CD8-positive, alpha-beta memory T cell (primary cell): ENCODE measurements at regions of chr12 and their contacts with region 1.

Region 1: GRCh38 chr12:120265473-120266179 is at the start of gene PXN:
- DNase-seq: peak; percentile 87 to 95 (median 90)
- H3K4me3 ChIP-seq: peak within 1 kb of the TSS; percentile 97
- H3K4me3 Mint-ChIP-seq: peak within 1 kb of the TSS; percentile 82 to 98 (median 94)
- H3K27ac ChIP-seq: peak within 1 kb of the TSS; percentile 82
- H3K27ac Mint-ChIP-seq: peak within 1 kb of the TSS; percentile 85 to 98 (median 91)
- H3K4me1 ChIP-seq: peaks cover 44% of the 10 kb centered on the region
- H3K4me1 Mint-ChIP-seq: peaks cover 41 to 48% (median 42%) of the 10 kb centered on the region in 3 donors
- H3K27me3 ChIP-seq: no peaks in the 10 kb centered on the region
- H3K27me3 Mint-ChIP-seq: peaks cover 0 to 2% of the 10 kb centered on the region in 2 donors
- total RNA-seq, gene PXN: 33.7 to 35.9 TPM

Region 2: DNA sequence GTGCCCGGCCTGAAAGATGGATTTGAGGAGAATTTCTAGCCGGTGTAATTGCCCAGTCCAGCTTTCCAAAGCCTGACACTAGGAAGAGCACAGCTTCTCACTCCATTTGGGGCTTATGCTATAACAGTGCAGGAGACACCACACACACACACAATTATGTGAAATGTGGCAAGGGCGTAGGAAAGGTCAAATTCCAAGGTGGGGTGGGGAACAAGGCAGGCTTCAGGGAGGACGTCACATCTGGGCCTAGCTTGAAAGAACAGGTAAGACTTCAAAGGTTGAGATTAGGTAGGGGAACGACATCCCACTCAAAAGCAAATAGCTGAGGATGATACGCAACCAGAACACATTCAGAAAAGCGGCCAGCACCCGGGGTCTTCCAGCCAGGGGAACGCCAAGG is 160.7 kb before region 1 on chr12:
- CTCF ChIA-PET with region 1: no interaction called
- POLR2A ChIA-PET with region 1: no interaction called
- DNase-seq: no peak
- H3K4me3 ChIP-seq: no peak overlapping the region
- H3K4me3 Mint-ChIP-seq: peak overlapping the region in 1 of 7 donors; percentile 68
- H3K27ac ChIP-seq: no peak overlapping the region
- H3K27ac Mint-ChIP-seq: peak overlapping the region in 3 of 8 donors; percentile 46 to 83 (median 78)
- H3K4me1 ChIP-seq: peaks cover 29% of the 10 kb centered on the region
- H3K4me1 Mint-ChIP-seq: peaks cover 45 to 69% (median 62%) of the 10 kb centered on the region in 3 donors
- H3K27me3 ChIP-seq: no peaks in the 10 kb centered on the region
- H3K27me3 Mint-ChIP-seq: no peaks in the 10 kb centered on the region

Region 3: GRCh38 chr12:120199595-120200306 is 65.9 kb before region 1 on chr12:
- CTCF ChIA-PET with region 1: interaction called, 43 read pairs
- POLR2A ChIA-PET with region 1: interaction called, 37 read pairs
- DNase-seq: peak in 2 of 5 donors; percentile 14 to 23
- H3K4me3 ChIP-seq: peak overlapping the region; percentile 99
- H3K4me3 Mint-ChIP-seq: peak overlapping the region; percentile 85 to 99 (median 98)
- H3K27ac ChIP-seq: peak overlapping the region; percentile 86
- H3K27ac Mint-ChIP-seq: peak overlapping the region; percentile 89 to 99 (median 96)
- H3K4me1 ChIP-seq: peaks cover 46% of the 10 kb centered on the region
- H3K4me1 Mint-ChIP-seq: peaks cover 36 to 51% (median 44%) of the 10 kb centered on the region in 3 donors
- H3K27me3 ChIP-seq: no peaks in the 10 kb centered on the region
- H3K27me3 Mint-ChIP-seq: peaks cover 0 to 1% of the 10 kb centered on the region in 2 donors

Region 4: DNA sequence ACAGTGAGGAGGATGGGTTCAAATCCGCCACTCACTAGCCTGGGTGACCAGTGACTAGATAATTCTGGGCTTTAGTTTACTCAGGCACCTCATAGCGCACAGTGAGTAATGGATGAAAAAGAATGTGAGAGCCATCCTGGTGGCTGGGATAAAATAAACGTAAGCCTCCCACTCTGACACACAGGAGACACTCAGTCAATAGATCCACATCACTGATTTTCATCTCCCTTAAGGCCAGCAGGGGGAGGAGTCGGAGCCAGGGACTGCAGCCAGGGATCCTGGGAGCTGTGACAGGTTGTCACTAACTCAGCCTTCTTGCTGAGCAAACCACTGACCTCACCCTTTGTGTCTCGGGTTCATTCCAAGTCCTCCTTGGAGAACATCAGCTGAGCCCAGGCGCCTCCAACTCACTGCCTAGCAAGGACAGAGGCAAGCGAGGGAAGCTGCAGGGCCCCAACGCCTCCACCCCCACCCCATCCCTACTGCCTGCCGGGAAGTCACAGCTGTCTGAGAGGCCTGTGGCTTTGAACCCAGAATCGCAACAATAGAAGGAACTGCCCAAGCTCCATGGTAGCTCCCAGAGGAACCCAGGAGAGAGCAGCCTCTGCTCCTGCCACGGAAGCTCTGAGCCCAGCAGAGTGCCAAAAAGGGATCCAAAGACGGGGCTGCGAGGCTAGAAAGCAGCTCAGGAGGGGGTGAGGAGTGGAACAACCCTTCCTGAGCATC is 30.8 kb before region 1 on chr12:
- CTCF ChIA-PET with region 1: interaction called, 727 read pairs
- POLR2A ChIA-PET with region 1: interaction called, 101 read pairs
- DNase-seq: no peak
- H3K4me3 ChIP-seq: no peak overlapping the region
- H3K4me3 Mint-ChIP-seq: peak overlapping the region in 2 of 7 donors; percentile 12 to 34
- H3K27ac ChIP-seq: peak overlapping the region; percentile 45
- H3K27ac Mint-ChIP-seq: peak overlapping the region in 7 of 8 donors; percentile 37 to 94 (median 84)
- H3K4me1 ChIP-seq: peaks cover 94% of the 10 kb centered on the region
- H3K4me1 Mint-ChIP-seq: peaks cover 82 to 90% (median 84%) of the 10 kb centered on the region in 3 donors
- H3K27me3 ChIP-seq: no peaks in the 10 kb centered on the region
- H3K27me3 Mint-ChIP-seq: no peaks in the 10 kb centered on the region

Region 5: GRCh38 chr12:120292661-120293531 is 27.3 kb after region 1 on chr12 and contains the start of gene RNU4-1:
- CTCF ChIA-PET with region 1: interaction called, 9 read pairs
- POLR2A ChIA-PET with region 1: interaction called, 45 read pairs
- DNase-seq: peak; percentile 52 to 90 (median 85)
- H3K4me3 ChIP-seq: peak within 1 kb of the TSS; percentile 91
- H3K4me3 Mint-ChIP-seq: no peak within 1 kb of the TSS
- H3K27ac ChIP-seq: peak within 1 kb of the TSS; percentile 100
- H3K27ac Mint-ChIP-seq: no peak within 1 kb of the TSS
- H3K4me1 ChIP-seq: peaks cover 16% of the 10 kb centered on the region
- H3K4me1 Mint-ChIP-seq: peaks cover 4 to 7% (median 5%) of the 10 kb centered on the region in 3 donors
- H3K27me3 ChIP-seq: no peaks in the 10 kb centered on the region
- H3K27me3 Mint-ChIP-seq: no peaks in the 10 kb centered on the region
- total RNA-seq, gene RNU4-1: 628 to 678 TPM

Region 6: GRCh38 chr12:120346681-120347080 is 81.1 kb after region 1 on chr12:
- CTCF ChIA-PET with region 1: no interaction called
- POLR2A ChIA-PET with region 1: no interaction called
- DNase-seq: no peak
- H3K4me3 ChIP-seq: no peak overlapping the region
- H3K4me3 Mint-ChIP-seq: no peak overlapping the region
- H3K27ac ChIP-seq: no peak overlapping the region
- H3K27ac Mint-ChIP-seq: no peak overlapping the region
- H3K4me1 ChIP-seq: no peaks in the 10 kb centered on the region
- H3K4me1 Mint-ChIP-seq: no peaks in the 10 kb centered on the region
- H3K27me3 ChIP-seq: no peaks in the 10 kb centered on the region
- H3K27me3 Mint-ChIP-seq: peaks cover 2 to 7% of the 10 kb centered on the region in 2 donors